Heart left ventricle (tissue), 16 donors: ENCODE measurements at regions of chr18 and their contacts with region 1.

Region 1: DNA sequence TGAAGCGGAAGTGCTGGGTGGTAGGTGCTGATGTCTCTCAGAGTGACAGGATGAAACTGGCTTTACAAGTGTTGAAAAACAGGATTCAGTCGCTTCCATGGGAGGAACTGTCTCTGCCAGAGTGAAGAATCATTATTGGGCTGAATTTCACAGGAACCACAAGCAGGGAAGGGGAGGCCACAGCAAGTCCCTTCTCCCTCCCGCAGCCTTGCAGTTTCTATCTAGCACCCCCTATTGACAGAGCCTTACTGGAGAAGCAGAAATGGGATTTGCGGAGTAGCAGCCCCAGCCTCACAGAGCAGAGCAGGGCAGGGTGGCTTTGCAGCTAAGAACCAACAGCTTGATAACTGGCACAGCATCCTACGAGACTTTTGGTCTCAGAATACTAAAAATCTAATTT is 33.3 kb upstream of the RMP24 start:
- DNase-seq: no peak
- ATAC-seq: peak in 1 of 4 donors; percentile 46
- H3K4me3 ChIP-seq: no peak overlapping the region
- H3K27ac ChIP-seq: no peak overlapping the region
- H3K4me1 ChIP-seq: no peaks in the 10 kb centered on the region
- H3K27me3 ChIP-seq: peaks cover 0 to 4% (median 0%) of the 10 kb centered on the region in 9 donors
- CTCF ChIP-seq: peak in 7 of 12 donors; percentile 9 to 42 (median 24)
- POLR2A ChIP-seq: no peak

Region 2: DNA sequence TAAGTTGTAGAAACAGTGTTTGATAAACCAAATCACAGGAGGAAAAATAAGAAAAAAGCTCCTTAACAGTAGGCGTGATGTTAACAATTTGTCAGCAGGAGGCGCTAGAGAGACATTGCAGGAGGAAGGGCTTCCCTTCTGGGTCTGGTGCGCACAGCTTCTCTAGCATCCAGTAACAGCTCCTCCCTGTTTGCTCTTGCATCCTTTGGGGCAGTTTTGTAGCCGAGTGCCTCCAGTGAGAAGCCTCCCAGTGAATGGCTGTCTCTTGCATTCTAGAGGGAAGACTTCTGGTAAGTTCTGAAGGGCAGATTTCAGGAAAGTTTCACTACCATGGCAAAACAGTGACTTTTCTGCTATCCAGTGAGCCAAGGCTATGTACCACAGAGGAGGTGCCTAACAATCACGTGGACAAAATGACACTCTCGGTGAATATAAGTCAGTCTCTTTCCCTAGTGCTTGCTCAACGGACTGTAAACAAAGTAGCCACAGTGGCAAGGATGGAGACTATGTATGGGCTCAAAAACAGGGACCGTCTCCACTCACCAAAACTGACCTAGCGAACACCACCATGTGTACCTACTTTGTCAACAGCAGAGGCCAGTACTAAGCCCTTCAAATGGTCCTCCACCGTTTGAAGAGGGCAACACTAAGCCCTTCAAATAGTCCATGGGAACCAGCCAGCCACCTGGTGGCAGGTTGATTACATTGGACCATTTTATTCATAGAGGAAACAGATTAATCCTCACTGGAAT is 552.4 kb before region 1 on chr18:
- intact Hi-C with region 1: loop called in 3 of 10 experiments (anchors 10 kb)
- DNase-seq: peak; percentile 57 to 69 (median 61)
- ATAC-seq: peak in 3 of 4 donors; percentile 66 to 81 (median 69)
- H3K4me3 ChIP-seq: no peak overlapping the region
- H3K27ac ChIP-seq: peak overlapping the region in 1 of 12 donors; percentile 16
- H3K4me1 ChIP-seq: peaks cover 0 to 5% (median 0%) of the 10 kb centered on the region in 12 donors
- H3K27me3 ChIP-seq: peaks cover 0 to 3% (median 0%) of the 10 kb centered on the region in 9 donors
- CTCF ChIP-seq: peak; percentile 86 to 99 (median 92)
- POLR2A ChIP-seq: no peak

Region 3: GRCh38 chr18:35998967-35999366 is 59.8 kb after region 1 on chr18:
- intact Hi-C with region 1: no loop called
- DNase-seq: no peak
- ATAC-seq: no peak
- H3K4me3 ChIP-seq: no peak overlapping the region
- H3K27ac ChIP-seq: no peak overlapping the region
- H3K4me1 ChIP-seq: peaks cover 0 to 7% (median 0%) of the 10 kb centered on the region in 12 donors
- H3K27me3 ChIP-seq: no peaks in the 10 kb centered on the region
- CTCF ChIP-seq: peak in 3 of 12 donors; percentile 17 to 29 (median 26)
- POLR2A ChIP-seq: no peak